GM12878 (cell line): ENCODE measurements at regions of chr1 and their contacts with region 1.

Region 1: DNA sequence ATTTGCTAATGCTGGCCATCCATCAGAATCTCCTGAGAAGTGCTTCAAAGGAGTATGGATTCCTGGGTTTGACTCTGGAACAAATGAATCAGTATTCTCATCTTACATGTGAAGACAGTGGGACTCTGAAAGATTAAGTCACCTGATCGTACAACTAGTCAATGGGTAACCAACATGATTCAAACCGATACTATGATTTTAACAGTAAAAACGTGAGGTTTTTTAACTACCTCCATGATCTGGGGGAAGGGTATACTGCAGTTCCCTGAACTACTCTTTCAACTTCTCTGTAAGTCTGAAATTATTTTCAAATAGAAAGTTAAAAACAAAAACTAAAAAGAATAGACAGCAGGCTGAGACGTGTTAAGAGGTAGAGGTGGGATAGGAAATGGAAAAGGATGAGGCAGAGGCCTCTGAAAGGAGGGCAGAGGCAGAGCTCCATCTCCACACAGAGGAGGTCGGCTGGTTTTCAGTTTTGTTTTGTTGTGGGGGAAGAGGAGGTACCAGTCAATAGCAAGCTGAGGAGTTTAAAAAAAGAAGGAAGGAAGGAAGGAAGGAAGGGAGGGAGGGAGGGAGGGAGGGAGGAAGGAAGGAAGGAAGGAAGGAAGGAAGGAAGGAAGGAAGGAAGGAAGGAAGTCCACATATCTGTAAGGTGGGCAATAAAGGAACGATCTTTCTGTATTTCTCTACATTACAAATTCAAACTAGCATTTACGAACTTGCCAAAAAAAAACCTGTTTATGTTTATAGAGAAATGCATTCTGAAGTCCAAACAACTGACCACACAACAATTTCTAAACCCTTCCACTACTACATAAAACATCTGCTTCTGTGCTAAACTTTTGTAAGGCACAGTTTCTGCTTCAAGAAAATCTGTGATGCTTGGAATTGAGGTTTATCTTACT is 213.1 kb downstream of the RERE start:
- DNase-seq: peak; percentile 82
- ATAC-seq: peak; percentile 95
- H3K4me3 ChIP-seq: peak overlapping the region; percentile 46; the same call in 1 of the 2 replicates
- H3K27ac ChIP-seq: peak overlapping the region; percentile 29; the same call in 1 of the 2 replicates
- H3K4me1 ChIP-seq: peaks cover 19% of the 10 kb centered on the region
- H3K27me3 ChIP-seq: no peaks in the 10 kb centered on the region
- CTCF ChIP-seq: no peak
- EP300 ChIP-seq: peak in 1 of 2 experiments; percentile 58; a peak in 1 of 4 replicates
- POLR2A ChIP-seq: no peak
- RAD21 ChIP-seq: 0 out of 2 replicates have a peak, but pooled peaks have one; percentile 12

Region 2: DNA sequence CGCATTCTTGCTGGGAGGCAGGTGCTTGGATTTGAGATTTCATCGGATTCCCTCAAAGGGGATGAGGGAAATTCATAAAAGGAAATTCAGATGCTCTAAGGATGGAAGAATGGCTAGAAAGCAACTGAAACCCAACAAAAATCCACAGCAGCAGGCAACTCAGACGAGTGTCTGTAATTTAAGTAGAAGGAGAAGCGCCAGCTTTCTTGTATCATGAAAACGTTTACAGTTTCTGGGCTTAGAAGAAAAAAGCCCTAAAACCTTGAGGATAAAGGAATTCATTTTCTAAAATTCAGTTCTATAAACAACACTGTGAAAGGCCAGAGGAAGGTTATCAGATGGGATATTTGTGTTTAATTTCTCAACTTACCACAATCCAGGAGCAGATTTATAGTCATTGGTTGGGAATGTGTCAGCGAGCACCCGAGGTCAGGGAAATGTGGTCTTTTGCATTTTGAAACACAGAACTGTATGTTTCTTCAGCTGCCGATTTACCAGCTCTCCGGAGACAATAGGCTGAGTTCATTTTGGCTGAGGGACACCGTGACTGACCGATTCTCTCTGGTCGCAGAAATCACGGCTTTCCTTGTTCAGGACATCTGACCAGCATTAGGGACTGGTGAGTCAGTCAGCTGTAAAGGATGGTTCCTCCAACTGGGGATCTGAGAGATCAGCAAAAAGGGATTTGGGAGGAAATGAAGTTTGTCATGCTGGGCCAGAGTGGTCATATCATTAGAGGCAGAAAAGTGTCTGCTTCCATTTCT is 466.6 kb before region 1 on chr1:
- CTCF ChIA-PET with region 1: no interaction called
- POLR2A ChIA-PET with region 1: no interaction called
- RAD21 ChIA-PET with region 1: no interaction called
- SMC1A ChIA-PET with region 1: no interaction called
- in situ Hi-C with region 1: no loop called
- intact Hi-C with region 1: no loop called
- DNase-seq: no peak
- ATAC-seq: no peak
- H3K4me3 ChIP-seq: no peak overlapping the region
- H3K27ac ChIP-seq: no peak overlapping the region
- H3K4me1 ChIP-seq: no peaks in the 10 kb centered on the region
- H3K27me3 ChIP-seq: no peaks in the 10 kb centered on the region
- CTCF ChIP-seq: no peak
- EP300 ChIP-seq: no peak
- POLR2A ChIP-seq: no peak
- RAD21 ChIP-seq: no peak

Region 3: GRCh38 chr1:8643542-8644536 is 39.5 kb after region 1 on chr1:
- CTCF ChIA-PET with region 1: interaction called, 3 read pairs
- POLR2A ChIA-PET with region 1: no interaction called
- RAD21 ChIA-PET with region 1: no interaction called
- SMC1A ChIA-PET with region 1: interaction called, 10 read pairs
- in situ Hi-C with region 1: no loop called
- intact Hi-C with region 1: loop called (anchors 5 kb)
- DNase-seq: peak; percentile 94
- ATAC-seq: peak; percentile 95
- H3K4me3 ChIP-seq: no peak overlapping the region
- H3K27ac ChIP-seq: peak overlapping the region; percentile 75
- H3K4me1 ChIP-seq: peaks cover 43% of the 10 kb centered on the region
- H3K27me3 ChIP-seq: no peaks in the 10 kb centered on the region
- CTCF ChIP-seq: no peak
- EP300 ChIP-seq: peak; percentile 52 to 61; a peak in 1 of 4 replicates
- POLR2A ChIP-seq: no peak
- RAD21 ChIP-seq: 0 out of 2 replicates have a peak, but pooled peaks have one; percentile 27

Region 4: DNA sequence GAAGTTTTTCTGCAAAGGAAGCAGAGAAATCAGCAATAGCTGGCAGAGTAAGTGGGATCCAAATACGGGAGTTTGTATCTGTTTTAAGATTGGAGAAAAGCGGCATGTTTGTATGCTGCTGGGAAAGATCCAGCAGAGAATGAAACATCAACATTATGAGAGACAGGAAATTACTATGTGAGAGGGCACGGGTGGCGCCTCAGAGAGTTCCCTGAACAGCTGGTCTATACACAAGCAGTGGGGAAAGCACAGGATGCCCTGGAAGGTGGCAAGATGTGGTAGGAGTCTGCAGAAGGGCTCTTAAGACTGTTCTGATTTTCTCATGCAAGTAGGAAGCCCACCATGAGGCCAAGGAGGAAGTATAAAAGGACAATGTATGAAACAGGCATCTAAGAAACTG is 82.7 kb after region 1 on chr1:
- CTCF ChIA-PET with region 1: no interaction called
- POLR2A ChIA-PET with region 1: no interaction called
- RAD21 ChIA-PET with region 1: no interaction called
- SMC1A ChIA-PET with region 1: no interaction called
- in situ Hi-C with region 1: no loop called
- intact Hi-C with region 1: no loop called
- DNase-seq: no peak
- ATAC-seq: peak; percentile 72
- H3K4me3 ChIP-seq: no peak overlapping the region
- H3K27ac ChIP-seq: peak overlapping the region; percentile 5; the same call in 1 of the 2 replicates
- H3K4me1 ChIP-seq: peaks cover 23% of the 10 kb centered on the region
- H3K27me3 ChIP-seq: no peaks in the 10 kb centered on the region
- CTCF ChIP-seq: no peak
- EP300 ChIP-seq: no peak
- POLR2A ChIP-seq: no peak
- RAD21 ChIP-seq: no peak

Region 5: DNA sequence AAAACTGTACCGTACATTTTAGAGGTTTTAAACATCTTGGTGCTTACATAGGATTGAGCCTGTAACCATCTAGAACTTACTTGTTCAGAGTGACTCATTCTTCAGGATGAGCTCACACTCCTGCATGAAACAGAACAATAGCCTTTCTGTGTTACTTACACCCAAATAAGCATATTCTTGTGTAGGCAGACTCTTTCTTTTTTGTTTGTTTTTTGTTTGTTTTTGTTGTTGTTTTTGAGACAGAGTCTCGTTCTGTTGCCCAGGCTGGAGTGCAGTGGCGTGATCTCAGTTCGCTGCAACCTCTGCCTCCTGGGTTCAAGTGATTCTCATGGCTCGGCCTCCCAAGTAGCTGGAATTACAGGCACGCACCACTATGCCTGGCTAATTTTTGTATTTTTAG is 337.6 kb after region 1 on chr1:
- CTCF ChIA-PET with region 1: no interaction called
- POLR2A ChIA-PET with region 1: no interaction called
- RAD21 ChIA-PET with region 1: no interaction called
- SMC1A ChIA-PET with region 1: no interaction called
- in situ Hi-C with region 1: no loop called
- intact Hi-C with region 1: no loop called
- DNase-seq: no peak
- ATAC-seq: peak; percentile 61
- H3K4me3 ChIP-seq: no peak overlapping the region
- H3K27ac ChIP-seq: no peak overlapping the region
- H3K4me1 ChIP-seq: peaks cover 9% of the 10 kb centered on the region
- H3K27me3 ChIP-seq: peaks cover 0 to 2% of the 10 kb centered on the region in 2 experiments; a peak in 1 of 4 replicates
- CTCF ChIP-seq: no peak
- EP300 ChIP-seq: no peak
- POLR2A ChIP-seq: no peak
- RAD21 ChIP-seq: no peak